Activated CD4-positive, alpha-beta memory T cell treated with anti-CD3 and anti-CD28 coated beads for 36 hours (primary cell): ENCODE measurements at regions of chr3 and their contacts with region 1.

Region 1: GRCh38 chr3:20054549-20054987 is 14.3 kb downstream of the KAT2B start:
- DNase-seq: peak; percentile 88
- H3K4me3 Mint-ChIP-seq: no peak overlapping the region
- H3K27ac Mint-ChIP-seq: no peak overlapping the region
- H3K4me1 Mint-ChIP-seq: peaks cover 39% of the 10 kb centered on the region
- H3K27me3 Mint-ChIP-seq: no peaks in the 10 kb centered on the region

Region 2: DNA sequence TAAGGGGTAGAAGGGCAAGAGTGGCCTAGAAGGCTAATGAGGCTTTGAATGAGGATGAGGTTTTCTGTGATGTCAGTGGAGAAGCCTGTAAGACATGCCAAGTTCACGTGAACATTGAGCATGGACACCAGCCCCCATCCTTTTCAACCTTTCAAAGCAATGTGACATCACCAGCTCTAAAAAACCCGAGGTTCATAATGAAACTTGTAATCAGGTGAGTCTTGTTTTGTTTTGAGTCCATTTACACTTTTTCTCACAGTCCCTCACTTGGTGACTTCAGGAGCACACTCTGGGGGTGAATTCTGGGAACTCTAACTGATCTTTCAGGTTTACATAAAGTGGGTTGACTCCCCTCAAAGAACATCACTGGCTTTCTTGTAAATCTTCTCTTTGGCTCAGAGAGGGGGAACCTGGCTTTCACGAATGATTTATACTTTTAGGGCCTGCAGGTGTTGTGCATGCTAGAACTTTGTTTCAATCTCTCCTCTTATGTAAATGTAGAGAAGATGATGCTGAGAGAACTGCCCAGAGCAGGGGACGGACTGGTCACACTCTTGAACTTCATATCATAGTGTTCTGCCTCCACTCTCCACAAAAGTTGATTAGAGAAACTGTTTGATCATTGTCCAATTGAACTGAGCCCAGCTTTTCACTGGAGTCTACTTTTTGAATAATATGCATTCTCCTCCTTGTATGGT is 1404.8 kb before region 1 on chr3:
- CTCF ChIA-PET with region 1: no interaction called
- POLR2A ChIA-PET with region 1: no interaction called
- intact Hi-C with region 1: loop called (anchors 10 kb)
- DNase-seq: peak; percentile 76
- H3K4me3 Mint-ChIP-seq: peak overlapping the region; percentile 30
- H3K27ac Mint-ChIP-seq: peak overlapping the region; percentile 98
- H3K4me1 Mint-ChIP-seq: peaks cover 89% of the 10 kb centered on the region
- H3K27me3 Mint-ChIP-seq: no peaks in the 10 kb centered on the region

Region 3: DNA sequence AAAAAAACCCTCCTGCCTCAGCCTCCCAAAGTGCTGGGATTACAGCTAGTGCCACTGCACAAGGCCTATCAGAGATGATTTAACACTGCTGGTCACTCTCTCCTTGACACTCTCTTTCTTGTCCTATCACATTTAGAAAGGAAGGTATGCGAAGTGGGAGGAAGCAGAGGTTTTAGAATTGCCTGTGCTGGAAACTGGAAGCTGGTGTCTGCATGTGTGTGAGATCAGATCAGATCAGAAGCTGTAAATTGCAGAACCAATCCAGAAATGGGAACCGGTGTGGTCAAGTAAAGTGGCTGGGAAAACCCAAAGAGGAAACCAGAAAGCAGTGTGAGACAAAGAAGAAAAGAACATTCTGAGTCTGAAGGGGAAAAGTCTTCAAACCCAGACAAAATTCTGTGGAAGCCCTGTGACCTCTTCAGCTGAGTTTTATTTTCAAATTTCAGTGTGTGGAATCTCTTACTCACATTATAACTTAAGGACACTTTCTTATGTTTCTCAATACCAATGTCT is 123.3 kb before region 1 on chr3:
- CTCF ChIA-PET with region 1: no interaction called
- POLR2A ChIA-PET with region 1: interaction called, 5 read pairs
- intact Hi-C with region 1: loop called (anchors 1 kb)
- DNase-seq: peak; percentile 84
- H3K4me3 Mint-ChIP-seq: peak overlapping the region; percentile 3
- H3K27ac Mint-ChIP-seq: peak overlapping the region; percentile 76
- H3K4me1 Mint-ChIP-seq: peaks cover 33% of the 10 kb centered on the region
- H3K27me3 Mint-ChIP-seq: peaks cover 12% of the 10 kb centered on the region

Region 4: GRCh38 chr3:19937459-19938294 is 116.9 kb before region 1 on chr3:
- CTCF ChIA-PET with region 1: interaction called, 3 read pairs
- POLR2A ChIA-PET with region 1: interaction called, 7 read pairs
- intact Hi-C with region 1: loop called (anchors 1 kb)
- DNase-seq: peak; percentile 27
- H3K4me3 Mint-ChIP-seq: no peak overlapping the region
- H3K27ac Mint-ChIP-seq: peak overlapping the region; percentile 75
- H3K4me1 Mint-ChIP-seq: peaks cover 29% of the 10 kb centered on the region
- H3K27me3 Mint-ChIP-seq: peaks cover 12% of the 10 kb centered on the region

Region 5: DNA sequence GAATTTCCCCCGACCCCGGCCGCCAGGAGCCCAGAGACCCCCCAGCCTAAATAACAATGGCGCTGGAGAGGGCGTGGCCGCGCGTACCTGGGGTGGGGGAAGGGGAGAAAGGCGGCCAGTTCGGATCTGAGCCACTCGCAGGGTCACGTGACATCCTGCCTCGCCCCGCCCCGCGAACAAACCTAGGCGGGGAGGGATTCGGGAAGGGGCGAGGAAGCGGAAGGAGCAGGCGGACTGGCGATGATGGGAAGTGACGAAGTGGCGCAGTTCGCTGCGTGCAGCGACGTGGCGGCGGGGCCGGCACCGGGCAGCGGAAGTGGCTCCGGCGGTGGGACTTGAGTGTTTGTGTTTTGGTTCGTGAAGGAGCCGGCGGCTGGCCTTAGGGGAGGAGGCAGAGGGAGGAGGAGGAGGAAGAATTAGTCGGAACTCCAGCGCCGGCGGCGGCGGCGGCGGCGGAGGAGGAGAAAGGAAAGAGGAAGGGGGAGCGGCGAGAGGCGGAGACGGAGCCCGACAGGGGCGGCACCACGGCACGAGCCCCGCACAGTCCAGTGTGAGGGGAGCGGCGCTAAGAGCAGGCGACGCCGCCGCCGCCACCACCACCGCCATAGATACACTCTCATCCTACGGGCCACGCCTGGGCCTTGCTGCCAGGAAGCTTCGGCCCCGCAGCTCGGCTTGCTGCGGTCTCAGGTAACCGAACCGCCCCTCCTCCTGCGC is 107.6 kb before region 1 on chr3 and contains the start of gene RAB5A:
- CTCF ChIA-PET with region 1: no interaction called
- POLR2A ChIA-PET with region 1: no interaction called
- intact Hi-C with region 1: loop called (anchors 1 kb)
- DNase-seq: peak; percentile 98
- H3K4me3 Mint-ChIP-seq: peak within 1 kb of the TSS; percentile 93
- H3K27ac Mint-ChIP-seq: peak within 1 kb of the TSS; percentile 99
- H3K4me1 Mint-ChIP-seq: peaks cover 44% of the 10 kb centered on the region
- H3K27me3 Mint-ChIP-seq: no peaks in the 10 kb centered on the region
- total RNA-seq, gene RAB5A: 55.6 to 65.3 TPM

Region 6: DNA sequence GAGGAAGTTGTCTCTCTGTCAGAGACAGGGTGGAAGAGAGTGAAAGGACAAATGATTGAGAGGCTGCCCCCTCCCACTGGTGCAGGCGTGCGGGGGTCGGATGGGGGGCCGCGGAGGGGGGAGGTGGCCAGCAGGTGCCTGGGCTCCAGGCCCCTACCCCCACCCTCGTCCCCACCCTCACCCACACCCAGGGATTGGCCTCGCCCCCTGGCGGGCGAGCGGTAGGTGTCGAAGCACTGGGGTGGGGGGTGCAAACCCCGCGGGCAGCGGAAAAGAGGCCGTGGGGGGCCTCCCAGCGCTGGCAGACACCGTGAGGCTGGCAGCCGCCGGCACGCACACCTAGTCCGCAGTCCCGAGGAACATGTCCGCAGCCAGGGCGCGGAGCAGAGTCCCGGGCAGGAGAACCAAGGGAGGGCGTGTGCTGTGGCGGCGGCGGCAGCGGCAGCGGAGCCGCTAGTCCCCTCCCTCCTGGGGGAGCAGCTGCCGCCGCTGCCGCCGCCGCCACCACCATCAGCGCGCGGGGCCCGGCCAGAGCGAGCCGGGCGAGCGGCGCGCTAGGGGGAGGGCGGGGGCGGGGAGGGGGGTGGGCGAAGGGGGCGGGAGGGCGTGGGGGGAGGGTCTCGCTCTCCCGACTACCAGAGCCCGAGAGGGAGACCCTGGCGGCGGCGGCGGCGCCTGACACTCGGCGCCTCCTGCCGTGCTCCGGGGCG is 14.6 kb before region 1 on chr3 and contains the start of gene KAT2B:
- CTCF ChIA-PET with region 1: interaction called, 23 read pairs
- POLR2A ChIA-PET with region 1: interaction called, 88 read pairs
- intact Hi-C with region 1: loop called (anchors 1 kb)
- DNase-seq: peak; percentile 91
- H3K4me3 Mint-ChIP-seq: peak within 1 kb of the TSS; percentile 91
- H3K27ac Mint-ChIP-seq: peak within 1 kb of the TSS; percentile 95
- H3K4me1 Mint-ChIP-seq: peaks cover 49% of the 10 kb centered on the region
- H3K27me3 Mint-ChIP-seq: no peaks in the 10 kb centered on the region
- total RNA-seq, gene KAT2B: 43.4 to 49.0 TPM

Region 7: GRCh38 chr3:20185701-20186598 is 131.4 kb after region 1 on chr3 and contains the start of gene SGO1:
- CTCF ChIA-PET with region 1: no interaction called
- POLR2A ChIA-PET with region 1: interaction called, 5 read pairs
- intact Hi-C with region 1: loop called (anchors 1 kb)
- DNase-seq: peak; percentile 100
- H3K4me3 Mint-ChIP-seq: no peak within 1 kb of the TSS
- H3K27ac Mint-ChIP-seq: no peak within 1 kb of the TSS
- H3K4me1 Mint-ChIP-seq: no peaks in the 10 kb centered on the region
- H3K27me3 Mint-ChIP-seq: no peaks in the 10 kb centered on the region
- total RNA-seq, gene SGO1: 37.4 to 37.8 TPM